RWPE1 (cell line): ENCODE measurements at regions of chr7 and their contacts with region 1.

Region 1: GRCh38 chr7:77759294-77759889 is 38.8 kb downstream of the TMEM60 start:
- DNase-seq: peak; percentile 36
- H3K27ac ChIP-seq: no peak overlapping the region
- CTCF ChIP-seq: peak; percentile 83

Region 2: DNA sequence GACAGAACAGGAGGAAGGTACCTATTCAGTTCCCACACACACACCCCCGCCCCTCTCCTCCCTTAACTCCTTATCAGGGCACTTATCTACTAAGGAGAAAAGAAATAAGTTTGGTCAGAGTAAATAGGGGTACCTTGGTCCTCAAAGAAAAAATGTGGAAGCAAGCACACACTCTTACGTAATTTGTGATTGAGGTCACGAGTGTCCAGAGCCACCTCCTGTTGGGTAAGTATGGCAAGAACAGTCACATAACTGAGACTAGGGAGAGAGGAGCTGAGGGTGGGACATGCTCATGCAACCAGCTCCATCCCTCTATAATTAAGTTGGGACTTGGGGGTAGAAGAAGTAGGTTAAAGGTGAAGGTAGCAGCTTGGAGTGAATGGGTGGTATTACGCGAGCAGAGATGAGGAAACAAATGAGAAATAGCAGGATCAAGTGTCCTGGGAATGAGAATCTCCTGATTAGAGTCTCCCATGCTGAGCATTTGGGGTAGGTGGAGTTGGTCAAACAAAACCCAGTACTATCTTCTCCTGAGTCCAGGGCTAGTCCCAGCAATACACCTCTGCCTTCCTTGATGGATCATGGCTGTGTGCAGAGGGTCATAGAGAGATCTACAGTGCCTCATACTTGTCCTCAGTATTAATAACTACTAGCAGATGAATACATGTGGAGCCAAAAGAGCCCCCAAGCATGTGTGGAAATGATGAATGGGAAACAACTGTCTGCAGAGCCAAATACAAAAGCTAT is 420.3 kb before region 1 on chr7:
- CTCF ChIA-PET with region 1: no interaction called
- POLR2A ChIA-PET with region 1: no interaction called
- DNase-seq: no peak
- H3K27ac ChIP-seq: no peak overlapping the region
- CTCF ChIP-seq: no peak

Region 3: DNA sequence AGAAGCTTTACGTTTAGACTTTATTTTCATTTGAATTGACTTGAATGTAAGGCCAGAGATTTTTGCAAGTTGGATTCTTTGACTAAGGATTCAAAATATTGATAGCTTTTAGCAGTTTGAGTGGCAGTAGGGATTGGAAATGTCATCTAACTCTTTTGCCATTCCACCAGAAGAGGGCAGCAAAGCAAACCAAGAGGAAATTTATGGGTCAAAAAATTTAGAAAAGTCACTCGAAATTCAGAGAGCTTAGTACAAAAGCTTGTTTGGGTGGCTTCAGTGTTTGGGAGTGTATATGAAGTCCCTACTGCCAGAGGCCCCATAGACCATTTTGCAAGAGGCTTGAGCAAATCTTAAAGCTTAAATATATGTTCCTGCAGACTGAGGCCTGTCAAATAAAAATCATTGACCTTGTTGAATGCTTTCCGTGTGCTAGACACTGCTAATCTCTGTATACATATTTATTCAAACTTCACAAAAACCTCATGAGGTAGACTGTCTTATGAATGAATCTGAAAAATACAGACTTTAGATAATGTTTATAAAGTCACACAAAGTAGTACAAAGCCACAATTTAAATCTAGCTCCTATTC is 107.7 kb before region 1 on chr7:
- CTCF ChIA-PET with region 1: interaction called, 15 read pairs
- POLR2A ChIA-PET with region 1: no interaction called
- DNase-seq: peak; percentile 34
- H3K27ac ChIP-seq: no peak overlapping the region
- CTCF ChIP-seq: peak; percentile 84

Region 4: GRCh38 chr7:78197447-78197846 is 438.1 kb after region 1 on chr7:
- CTCF ChIA-PET with region 1: no interaction called
- POLR2A ChIA-PET with region 1: no interaction called
- DNase-seq: no peak
- H3K27ac ChIP-seq: no peak overlapping the region
- CTCF ChIP-seq: no peak